Ascending aorta (tissue), 2 donors: ENCODE measurements at regions of chr10 and their contacts with region 1.

Region 1: DNA sequence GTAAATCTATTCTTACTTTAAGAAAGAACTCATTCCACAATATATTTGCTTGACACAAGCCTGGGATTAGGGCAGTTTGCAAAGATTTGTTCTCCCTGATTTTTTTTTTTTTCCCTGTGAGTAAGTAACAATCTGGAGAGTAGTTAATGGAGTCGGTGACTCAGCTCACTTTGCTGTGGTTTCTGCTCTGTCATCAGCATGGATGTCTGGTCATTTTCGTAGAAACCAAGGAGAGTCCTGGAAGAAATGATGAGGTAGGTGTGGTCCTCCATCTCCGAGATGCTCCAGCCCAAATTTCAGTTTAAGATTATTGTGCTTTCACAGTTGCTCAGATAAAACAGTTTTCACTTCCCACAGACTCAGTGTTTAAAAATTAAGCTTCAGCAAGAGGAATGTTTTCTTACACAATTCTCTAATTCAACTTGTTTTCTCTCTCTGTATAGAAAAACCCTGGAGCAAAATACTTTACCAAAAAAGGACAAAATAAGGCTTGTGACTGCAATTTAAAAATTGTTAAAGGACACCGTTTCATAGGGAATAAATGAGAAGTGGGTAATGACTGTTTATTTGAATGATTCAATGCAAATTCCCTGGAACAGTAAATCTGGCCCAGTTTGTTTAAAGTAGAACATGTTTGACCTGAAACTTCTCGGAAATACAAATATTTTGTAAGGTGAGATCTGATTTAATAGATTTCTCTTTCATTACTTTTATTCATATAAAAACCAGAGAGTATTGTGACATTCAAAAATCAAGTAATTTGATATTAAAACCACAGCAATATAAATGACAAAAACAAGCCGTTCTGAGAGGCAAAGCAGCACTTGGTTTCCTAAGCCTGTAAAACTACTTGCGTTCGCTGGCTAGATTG is 76.5 kb upstream of the PITRM1 start:
- DNase-seq: peak in 1 of 2 donors; percentile 81
- H3K4me3 ChIP-seq: peak overlapping the region; percentile 6
- H3K27ac ChIP-seq: peak overlapping the region; percentile 76 to 81
- H3K4me1 ChIP-seq: peaks cover 0 to 14% of the 10 kb centered on the region in 2 donors
- H3K27me3 ChIP-seq: no peaks in the 10 kb centered on the region
- CTCF ChIP-seq: no peak

Region 2: DNA sequence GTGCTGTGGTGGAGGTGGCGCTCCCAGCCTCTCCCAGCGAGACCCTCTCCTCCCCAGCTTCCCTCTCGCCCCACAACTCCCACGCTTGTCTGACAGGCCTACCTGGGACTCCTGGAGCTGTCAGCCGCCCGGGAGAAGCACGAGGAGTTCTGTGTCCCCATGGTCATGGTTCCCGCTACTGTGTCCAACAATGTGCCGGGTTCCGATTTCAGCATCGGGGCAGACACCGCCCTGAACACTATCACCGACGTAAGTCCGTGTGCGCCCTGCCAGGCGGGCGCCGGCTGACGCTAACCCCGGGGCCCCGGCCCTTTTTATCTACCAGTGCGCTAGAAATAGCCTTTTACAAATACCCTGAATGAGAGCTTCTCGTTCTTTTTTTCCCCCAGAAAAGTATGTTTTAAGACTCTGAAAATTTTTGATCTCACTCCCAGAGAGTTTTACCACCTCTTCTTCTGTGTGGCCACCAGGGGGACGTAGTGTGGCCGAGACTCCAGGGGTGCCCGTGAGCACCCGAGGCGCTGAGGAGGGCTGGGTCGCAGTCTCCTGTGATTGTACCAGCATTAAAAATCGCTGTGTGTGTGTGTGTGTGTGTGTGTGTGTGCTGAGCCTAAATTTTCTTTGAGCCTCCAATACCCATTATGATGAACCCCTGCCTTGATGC is 129.2 kb before region 1 on chr10:
- intact Hi-C with region 1: no loop called
- DNase-seq: no peak
- H3K4me3 ChIP-seq: no peak overlapping the region
- H3K27ac ChIP-seq: peak overlapping the region; percentile 56 to 77
- H3K4me1 ChIP-seq: no peaks in the 10 kb centered on the region
- H3K27me3 ChIP-seq: no peaks in the 10 kb centered on the region
- CTCF ChIP-seq: peak; percentile 52 to 79 (median 55)

Region 3: GRCh38 chr10:3623746-3624145 is 374.6 kb after region 1 on chr10:
- intact Hi-C with region 1: loop called (anchors 5 kb)
- DNase-seq: peak in 1 of 2 donors; percentile 75
- H3K4me3 ChIP-seq: peak overlapping the region in 1 of 2 donors; percentile 42
- H3K27ac ChIP-seq: peak overlapping the region; percentile 50 to 67
- H3K4me1 ChIP-seq: peaks cover 3 to 12% of the 10 kb centered on the region in 2 donors
- H3K27me3 ChIP-seq: no peaks in the 10 kb centered on the region
- CTCF ChIP-seq: no peak